Calu3 (cell line): ENCODE measurements at regions of chrX and their contacts with region 1.

Region 1: DNA sequence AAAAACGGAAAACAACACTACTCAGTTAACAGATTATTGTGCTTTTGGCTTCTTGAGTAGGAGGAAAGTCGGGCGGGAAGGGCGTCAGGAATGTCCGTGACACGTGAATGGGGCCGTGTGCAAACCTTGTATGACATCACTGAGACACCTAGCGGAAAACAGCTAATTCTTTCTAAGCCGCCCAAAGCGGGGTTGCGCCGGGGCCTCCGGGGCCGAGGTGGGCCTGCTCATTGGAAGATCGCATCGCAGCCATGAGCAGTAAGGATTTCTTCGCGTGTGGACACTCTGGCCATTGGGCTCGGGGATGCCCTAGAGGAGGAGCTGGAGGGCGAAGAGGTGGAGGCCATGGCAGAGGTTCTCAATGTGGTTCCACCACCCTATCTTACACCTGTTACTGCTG is at the start of gene ZCCHC13:
- DNase-seq: no peak
- H3K4me3 Mint-ChIP-seq: no peak within 1 kb of the TSS
- H3K27ac Mint-ChIP-seq: no peak within 1 kb of the TSS
- H3K4me1 Mint-ChIP-seq: no peaks in the 10 kb centered on the region
- H3K27me3 Mint-ChIP-seq: no peaks in the 10 kb centered on the region
- CTCF ChIP-seq: no peak
- total RNA-seq, gene ZCCHC13: not detected in 2 replicates

Region 2: GRCh38 chrX:73577368-73577767 is 726.6 kb before region 1 on chrX:
- CTCF ChIA-PET with region 1: interaction called, 14 read pairs
- intact Hi-C with region 1: no loop called
- DNase-seq: peak; percentile 44
- H3K4me3 Mint-ChIP-seq: no peak overlapping the region
- H3K27ac Mint-ChIP-seq: peak overlapping the region; percentile 39
- H3K4me1 Mint-ChIP-seq: no peaks in the 10 kb centered on the region
- H3K27me3 Mint-ChIP-seq: no peaks in the 10 kb centered on the region
- CTCF ChIP-seq: no peak

Region 3: DNA sequence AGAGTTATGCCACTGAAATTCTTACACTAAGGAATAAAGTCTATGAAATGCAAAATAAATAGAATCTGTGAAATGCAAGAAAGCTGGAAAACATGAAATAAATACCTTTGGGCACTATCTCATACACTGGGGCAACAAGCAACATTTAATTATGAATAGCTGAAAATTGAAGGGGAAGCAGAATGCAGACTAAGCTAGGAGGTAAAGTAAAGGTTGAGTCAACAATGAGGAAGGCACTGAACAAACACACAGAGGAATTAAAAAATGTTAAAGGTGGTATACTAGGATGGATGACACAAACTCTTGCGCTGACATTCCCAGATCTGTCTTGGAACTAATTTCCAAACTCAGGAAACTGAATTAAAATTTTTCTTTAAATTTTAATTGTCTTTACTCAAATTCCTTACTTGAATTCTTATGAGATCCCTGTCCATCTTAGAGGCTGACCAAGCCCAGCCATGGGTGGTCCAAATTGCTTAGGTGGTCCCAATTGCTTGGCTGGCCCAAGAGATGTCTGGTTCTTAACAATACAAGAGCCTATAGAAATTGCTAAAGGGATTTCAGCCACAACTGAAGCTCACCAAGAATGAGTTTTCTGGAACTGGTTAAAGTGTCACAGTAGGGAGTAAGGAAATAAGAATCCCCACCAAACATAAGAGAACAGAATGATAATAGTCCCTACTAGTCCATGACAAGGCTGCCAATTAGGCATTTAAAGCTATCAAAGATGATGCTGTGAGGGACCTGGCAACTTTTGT is 41.4 kb before region 1 on chrX:
- CTCF ChIA-PET with region 1: no interaction called
- intact Hi-C with region 1: no loop called
- DNase-seq: no peak
- H3K4me3 Mint-ChIP-seq: no peak overlapping the region
- H3K27ac Mint-ChIP-seq: no peak overlapping the region
- H3K4me1 Mint-ChIP-seq: no peaks in the 10 kb centered on the region
- H3K27me3 Mint-ChIP-seq: no peaks in the 10 kb centered on the region
- CTCF ChIP-seq: no peak